Activated B cell treated with CpG ODN at 0.5 μM for 24 hours (primary cell): ENCODE measurements at regions of chr4 and their contacts with region 1.

Region 1: GRCh38 chr4:99847362-99847976 is 30.8 kb downstream of the DAPP1 start:
- DNase-seq: no peak
- ATAC-seq: peak; percentile 72
- H3K4me3 Mint-ChIP-seq: peak overlapping the region; percentile 70
- H3K27ac Mint-ChIP-seq: peak overlapping the region; percentile 91
- H3K4me1 Mint-ChIP-seq: peaks cover 77% of the 10 kb centered on the region
- H3K27me3 Mint-ChIP-seq: no peaks in the 10 kb centered on the region
- CTCF ChIP-seq: no peak

Region 2: DNA sequence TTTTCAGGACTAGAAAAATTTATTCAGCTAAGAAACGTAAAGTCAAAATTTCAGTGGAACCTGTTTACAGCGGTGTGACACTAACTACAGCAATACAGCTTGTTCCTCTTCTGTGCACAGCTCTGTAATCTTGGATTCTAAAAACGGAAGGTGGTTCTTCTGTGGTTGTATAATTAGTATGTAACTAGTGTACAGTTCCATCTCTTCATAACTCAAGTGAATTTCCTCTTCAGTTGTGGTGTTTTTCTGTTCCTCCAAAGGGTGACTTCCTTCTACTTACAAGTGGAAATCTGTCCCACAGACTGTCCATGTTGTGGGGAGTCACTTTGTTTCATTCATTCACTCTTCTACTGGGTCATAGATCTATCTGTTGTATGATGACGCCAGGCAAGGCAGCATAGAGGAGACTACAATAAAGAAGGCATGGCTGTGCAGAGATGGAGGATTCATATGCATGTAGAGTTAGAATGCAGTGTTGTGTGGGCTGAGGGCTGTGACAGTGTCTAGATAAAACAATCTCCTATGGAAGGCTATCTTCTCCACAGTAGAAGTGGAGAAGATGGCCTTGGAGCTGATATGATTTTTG is 25.5 kb before region 1 on chr4:
- CTCF ChIA-PET with region 1: interaction called, 4 read pairs
- POLR2A ChIA-PET with region 1: interaction called, 75 read pairs
- intact Hi-C with region 1: loop called (anchors 1 kb)
- DNase-seq: no peak
- ATAC-seq: peak; percentile 77
- H3K4me3 Mint-ChIP-seq: peak overlapping the region; percentile 81
- H3K27ac Mint-ChIP-seq: peak overlapping the region; percentile 94
- H3K4me1 Mint-ChIP-seq: peaks cover 91% of the 10 kb centered on the region
- H3K27me3 Mint-ChIP-seq: no peaks in the 10 kb centered on the region
- CTCF ChIP-seq: no peak

Region 3: DNA sequence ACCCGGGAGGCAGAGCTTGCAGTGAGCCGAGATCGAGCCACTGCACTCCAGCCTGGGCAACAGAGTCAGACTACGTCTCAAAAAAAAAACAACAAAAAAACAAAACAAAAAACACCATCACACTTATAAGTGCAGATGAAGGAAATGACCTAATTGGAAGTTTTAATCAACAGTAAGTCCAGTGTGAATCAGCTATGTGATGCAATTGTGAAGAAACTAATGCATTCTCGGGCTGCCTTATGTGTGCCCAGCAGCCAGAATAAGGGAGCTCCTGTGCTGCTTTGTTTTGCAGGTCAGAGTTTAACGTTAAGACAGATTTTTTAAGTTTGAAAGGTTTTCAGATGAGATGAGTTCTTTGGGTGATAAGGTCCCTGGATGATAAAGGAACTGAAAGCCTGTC is 20.0 kb before region 1 on chr4:
- CTCF ChIA-PET with region 1: no interaction called
- POLR2A ChIA-PET with region 1: interaction called, 23 read pairs
- intact Hi-C with region 1: loop called (anchors 1 kb)
- DNase-seq: no peak
- ATAC-seq: no peak
- H3K4me3 Mint-ChIP-seq: peak overlapping the region; percentile 9
- H3K27ac Mint-ChIP-seq: peak overlapping the region; percentile 38
- H3K4me1 Mint-ChIP-seq: peaks cover 81% of the 10 kb centered on the region
- H3K27me3 Mint-ChIP-seq: no peaks in the 10 kb centered on the region
- CTCF ChIP-seq: no peak

Region 4: GRCh38 chr4:99861120-99861905 is 13.8 kb after region 1 on chr4:
- CTCF ChIA-PET with region 1: no interaction called
- POLR2A ChIA-PET with region 1: interaction called, 7 read pairs
- intact Hi-C with region 1: loop called (anchors 1 kb)
- DNase-seq: no peak
- ATAC-seq: no peak
- H3K4me3 Mint-ChIP-seq: no peak overlapping the region
- H3K27ac Mint-ChIP-seq: peak overlapping the region; percentile 30
- H3K4me1 Mint-ChIP-seq: peaks cover 51% of the 10 kb centered on the region
- H3K27me3 Mint-ChIP-seq: no peaks in the 10 kb centered on the region
- CTCF ChIP-seq: no peak